HEK293 (cell line): ENCODE measurements at regions of chr6 and their contacts with region 1.

Region 1: DNA sequence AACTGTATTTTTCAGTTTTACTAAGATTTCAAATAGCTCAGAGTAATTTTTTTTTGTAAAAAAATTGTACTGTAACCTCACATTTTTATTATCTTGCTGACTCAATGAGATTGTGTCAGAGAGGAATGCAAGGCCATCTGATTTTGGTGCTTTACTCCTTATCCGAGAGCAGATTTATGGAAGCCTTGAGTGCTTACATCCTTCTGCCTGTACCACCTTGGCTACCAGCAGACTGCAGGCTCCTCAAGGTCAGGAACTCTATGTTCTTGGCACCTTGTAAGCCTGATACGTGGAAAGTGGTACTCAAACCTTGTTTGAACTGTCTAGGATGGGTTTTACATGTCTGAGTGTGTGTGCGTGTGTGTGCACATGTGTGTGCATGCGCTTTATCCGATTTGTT is 80.1 kb upstream of the MLIP start:
- H3K4me3 ChIP-seq: no peak overlapping the region
- H3K27ac ChIP-seq: no peak overlapping the region
- H3K4me1 ChIP-seq: no peaks in the 10 kb centered on the region
- CTCF ChIP-seq: no peak

Region 2: GRCh38 chr6:54060286-54060685 is 29.1 kb after region 1 on chr6:
- CTCF ChIA-PET with region 1: no interaction called
- POLR2A ChIA-PET with region 1: no interaction called
- H3K4me3 ChIP-seq: no peak overlapping the region
- H3K27ac ChIP-seq: no peak overlapping the region
- H3K4me1 ChIP-seq: no peaks in the 10 kb centered on the region
- CTCF ChIP-seq: no peak

Region 3: DNA sequence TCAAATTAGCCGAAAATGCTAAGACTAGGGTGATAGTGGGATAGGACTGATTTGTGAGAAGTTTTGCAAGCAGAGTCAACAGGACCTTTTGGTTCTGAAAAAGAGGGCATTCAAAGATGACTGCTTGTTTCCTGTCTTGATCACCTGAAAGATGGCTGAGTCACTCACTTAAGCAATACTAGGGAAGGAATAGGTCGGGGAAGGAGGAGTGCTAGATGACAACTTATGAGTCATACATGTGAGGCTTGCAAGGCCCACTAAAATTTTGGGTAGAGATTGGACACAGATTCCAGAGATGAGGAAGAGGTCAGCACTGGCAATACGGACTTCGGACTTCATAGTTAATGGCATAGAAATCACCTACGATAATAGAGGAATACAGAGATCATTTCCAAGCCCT is 904.6 kb after region 1 on chr6:
- CTCF ChIA-PET with region 1: interaction called, 10 read pairs
- POLR2A ChIA-PET with region 1: no interaction called
- H3K4me3 ChIP-seq: no peak overlapping the region
- H3K27ac ChIP-seq: no peak overlapping the region
- H3K4me1 ChIP-seq: peaks cover 3% of the 10 kb centered on the region; the same call in 1 of the 2 replicates
- CTCF ChIP-seq: no peak